Mammary epithelial cell (primary cell): ENCODE measurements at regions of chr3 and their contacts with region 1.

Region 1: GRCh38 chr3:48268381-48269183 is 27.7 kb downstream of the ZNF589 start:
- DNase-seq: peak; percentile 99
- H3K4me3 ChIP-seq: peak overlapping the region; percentile 2 to 7 (median 7)
- H3K27ac ChIP-seq: peak overlapping the region; percentile 98
- H3K4me1 ChIP-seq: peaks cover 34% of the 10 kb centered on the region
- H3K27me3 ChIP-seq: no peaks in the 10 kb centered on the region
- CTCF ChIP-seq: no peak

Region 2: DNA sequence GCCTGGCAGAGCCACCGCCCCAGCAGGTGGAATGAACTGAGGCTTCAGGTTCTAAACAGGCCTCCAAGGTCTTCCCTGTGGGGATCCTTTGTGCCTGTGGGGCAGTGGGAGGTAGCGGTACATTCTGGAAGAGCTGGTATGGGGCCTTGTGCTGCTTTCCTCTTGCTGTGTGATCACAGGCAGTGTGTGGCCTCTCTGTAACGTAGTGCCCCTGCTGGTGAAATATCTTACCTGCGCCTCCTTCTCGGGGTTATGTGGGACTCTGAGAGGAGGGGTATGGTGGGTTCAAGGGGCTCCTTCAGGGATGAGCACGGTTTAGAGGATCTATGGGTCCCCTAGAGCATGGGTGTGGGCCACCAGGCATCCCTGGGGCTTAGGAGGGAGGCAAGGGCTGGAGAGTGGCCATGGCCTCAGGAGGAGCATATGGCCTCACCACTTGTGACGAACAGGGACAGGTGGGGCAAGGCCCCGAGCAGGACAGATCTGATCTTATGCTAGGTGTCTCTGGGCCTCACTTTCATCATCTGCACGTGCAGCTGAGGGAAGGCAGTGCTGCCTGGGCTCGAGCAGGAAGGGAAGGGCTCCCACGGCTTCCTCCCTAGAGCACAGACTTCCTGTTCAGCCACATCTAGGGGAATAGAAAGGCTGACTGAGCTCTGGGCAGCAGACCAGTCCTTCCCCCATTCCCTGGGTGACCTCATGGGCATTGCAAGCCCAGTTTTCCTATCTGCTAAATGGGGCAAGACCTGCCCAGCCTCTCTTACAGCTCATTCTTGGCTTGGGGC is 1573.2 kb before region 1 on chr3:
- CTCF ChIA-PET with region 1: interaction called, 11 read pairs
- dilution Hi-C with region 1: no loop called
- in situ Hi-C with region 1: no loop called
- intact Hi-C with region 1: no loop called
- DNase-seq: no peak
- H3K4me3 ChIP-seq: no peak overlapping the region
- H3K27ac ChIP-seq: no peak overlapping the region
- H3K4me1 ChIP-seq: peaks cover 42% of the 10 kb centered on the region
- H3K27me3 ChIP-seq: no peaks in the 10 kb centered on the region
- CTCF ChIP-seq: peak; percentile 34 to 42

Region 3: DNA sequence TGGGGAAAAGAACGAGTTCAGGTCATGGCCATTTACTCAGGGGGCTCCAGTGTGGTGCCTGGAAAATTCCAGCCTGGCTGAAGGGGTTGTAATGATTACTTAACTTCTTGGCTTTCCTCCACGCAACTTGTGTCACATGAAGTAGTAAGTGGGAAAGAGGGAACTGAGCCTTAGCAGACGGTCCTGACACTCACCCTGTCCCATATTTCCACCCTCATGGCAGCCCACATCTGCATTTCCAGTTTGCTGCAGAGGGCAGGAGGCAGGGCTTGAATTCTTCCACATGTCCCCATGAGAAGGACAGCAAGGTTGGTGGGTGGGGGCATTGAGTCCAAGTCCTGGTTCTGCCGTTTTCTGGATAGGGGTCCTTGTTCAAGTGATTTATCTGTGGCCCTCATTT is 53.1 kb before region 1 on chr3:
- CTCF ChIA-PET with region 1: no interaction called
- dilution Hi-C with region 1: no loop called
- in situ Hi-C with region 1: no loop called
- intact Hi-C with region 1: no loop called
- DNase-seq: no peak
- H3K4me3 ChIP-seq: no peak overlapping the region
- H3K27ac ChIP-seq: no peak overlapping the region
- H3K4me1 ChIP-seq: no peaks in the 10 kb centered on the region
- H3K27me3 ChIP-seq: no peaks in the 10 kb centered on the region
- CTCF ChIP-seq: no peak

Region 4: GRCh38 chr3:48232734-48233133 is 35.8 kb before region 1 on chr3:
- CTCF ChIA-PET with region 1: interaction called, 9 read pairs
- dilution Hi-C with region 1: no loop called
- in situ Hi-C with region 1: no loop called
- intact Hi-C with region 1: loop called (anchors 1 kb)
- DNase-seq: peak; percentile 60
- H3K4me3 ChIP-seq: peak overlapping the region in 1 of 3 experiments; percentile 4
- H3K27ac ChIP-seq: no peak overlapping the region
- H3K4me1 ChIP-seq: peaks cover 5% of the 10 kb centered on the region
- H3K27me3 ChIP-seq: no peaks in the 10 kb centered on the region
- CTCF ChIP-seq: peak; percentile 52 to 74

Region 5: DNA sequence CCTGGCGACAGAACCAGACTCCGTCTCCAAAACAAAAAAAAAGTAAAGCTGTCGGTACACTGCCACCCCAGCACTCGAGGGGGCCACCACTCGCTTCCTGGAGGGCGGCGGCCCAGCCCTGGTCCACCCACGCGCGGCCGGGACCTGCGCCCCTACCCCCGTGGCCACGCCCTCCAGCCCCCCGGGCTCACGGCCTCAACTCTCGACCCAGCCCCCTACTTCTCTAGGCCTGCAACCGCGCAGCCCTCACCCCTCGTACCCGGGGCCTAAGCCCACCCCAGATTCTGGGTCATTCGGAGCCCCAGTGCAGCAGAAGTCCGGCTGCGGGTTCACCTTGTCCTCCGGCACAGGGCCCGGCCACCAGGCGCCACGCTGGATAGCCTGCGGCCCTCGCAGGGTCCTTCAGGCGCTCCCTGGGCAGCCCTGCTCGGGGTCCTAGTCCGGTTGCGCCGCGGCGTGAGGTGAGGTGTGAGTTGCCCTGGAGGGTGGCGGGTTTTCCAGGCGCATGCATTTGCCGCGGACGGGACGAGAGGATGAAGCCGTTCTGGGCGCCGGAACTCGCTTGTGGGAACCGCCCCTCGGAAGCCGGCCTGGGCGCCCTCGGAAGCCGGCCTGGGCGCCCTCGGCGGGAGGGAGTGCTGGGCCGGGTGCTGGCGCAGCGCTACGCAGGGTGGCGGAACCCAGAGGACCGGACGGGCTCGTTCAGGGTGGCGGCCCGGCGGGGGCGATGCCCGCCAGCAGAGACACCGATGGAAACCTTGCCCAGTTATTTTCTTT is 32.6 kb after region 1 on chr3:
- CTCF ChIA-PET with region 1: no interaction called
- dilution Hi-C with region 1: no loop called
- in situ Hi-C with region 1: no loop called
- intact Hi-C with region 1: loop called (anchors 2 kb)
- DNase-seq: peak; percentile 87
- H3K4me3 ChIP-seq: peak within 1 kb of the TSS; percentile 72 to 92 (median 85)
- H3K27ac ChIP-seq: peak within 1 kb of the TSS; percentile 56
- H3K4me1 ChIP-seq: peaks cover 7% of the 10 kb centered on the region
- H3K27me3 ChIP-seq: no peaks in the 10 kb centered on the region
- CTCF ChIP-seq: peak in 1 of 2 donors; percentile 0

Region 6: DNA sequence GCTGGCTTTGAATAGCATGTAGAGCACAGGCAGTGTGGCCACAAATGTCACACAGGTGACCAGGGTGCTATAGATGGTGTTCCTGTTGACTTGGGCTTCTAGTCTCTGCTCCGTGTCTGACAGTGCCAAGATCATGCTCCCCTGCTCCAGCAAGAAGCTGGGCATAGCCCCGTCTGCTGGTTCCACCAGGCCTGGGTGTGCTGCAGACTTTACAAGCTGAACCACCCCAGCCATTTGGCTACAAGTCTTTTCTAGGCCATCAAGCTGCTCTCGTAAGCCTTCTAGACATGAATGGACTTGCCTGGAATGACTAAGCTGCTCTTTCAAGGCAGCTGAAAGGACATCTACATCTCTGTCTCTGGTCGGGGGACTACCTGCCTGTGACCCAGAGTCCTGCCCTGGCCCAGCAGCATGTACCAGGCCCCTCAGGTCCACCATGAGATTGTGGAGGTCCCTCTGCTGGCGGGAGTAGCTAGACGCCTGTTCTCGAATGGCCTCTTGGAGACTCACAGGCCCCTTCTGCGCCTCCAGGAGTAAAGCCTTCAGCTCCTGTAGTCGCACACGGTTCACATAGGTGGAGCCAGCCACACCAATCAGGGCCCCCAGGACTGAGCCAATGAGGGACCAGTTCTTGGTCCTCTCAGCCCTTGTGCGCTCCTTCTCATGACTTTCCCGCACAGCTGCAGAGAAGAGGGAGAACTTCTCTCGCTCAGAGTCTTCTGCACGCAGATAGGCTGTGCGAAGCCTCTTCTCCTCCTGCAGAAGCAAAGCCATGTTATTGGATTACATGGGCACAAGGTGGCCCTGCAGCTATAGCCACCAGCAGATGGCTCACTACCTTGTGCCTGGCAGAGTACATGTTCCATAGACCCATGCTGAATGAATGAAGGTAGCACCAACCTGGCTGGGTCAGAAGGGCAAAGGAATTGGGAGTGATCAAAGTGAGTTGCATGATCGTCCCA is 164.1 kb after region 1 on chr3:
- CTCF ChIA-PET with region 1: interaction called, 20 read pairs
- dilution Hi-C with region 1: no loop called
- in situ Hi-C with region 1: loop called (anchors 5 kb)
- intact Hi-C with region 1: loop called (anchors 1 kb)
- DNase-seq: peak; percentile 94
- H3K4me3 ChIP-seq: peak overlapping the region; percentile 30 to 55 (median 45)
- H3K27ac ChIP-seq: peak overlapping the region; percentile 55
- H3K4me1 ChIP-seq: peaks cover 63% of the 10 kb centered on the region
- H3K27me3 ChIP-seq: no peaks in the 10 kb centered on the region
- CTCF ChIP-seq: peak in 1 of 2 donors; percentile 33